ENCODE measurements at regions of chr11 and their contacts with region 1.

Region 1: GRCh38 chr11:11864332-11864731 is 22.6 kb downstream of the USP47 start:
- DNase-seq: no peak
- ATAC-seq: no peak
- H3K4me3 ChIP-seq: no peak overlapping the region
- H3K4me3 Mint-ChIP-seq: no peak overlapping the region
- H3K27ac ChIP-seq: no peak overlapping the region
- H3K27ac Mint-ChIP-seq: no peak overlapping the region
- H3K4me1 ChIP-seq: peaks cover 9 to 21% of the 10 kb centered on the region in 2 donors
- H3K4me1 Mint-ChIP-seq: peaks cover 61% of the 10 kb centered on the region
- H3K27me3 ChIP-seq: no peaks in the 10 kb centered on the region
- H3K27me3 Mint-ChIP-seq: no peaks in the 10 kb centered on the region
- CTCF ChIP-seq: no peak

Region 2: GRCh38 chr11:11777897-11778296 is 86.4 kb before region 1 on chr11:
- CTCF ChIA-PET with region 1: no interaction called
- POLR2A ChIA-PET with region 1: no interaction called
- intact Hi-C with region 1: no loop called
- DNase-seq: no peak
- ATAC-seq: no peak
- H3K4me3 ChIP-seq: no peak overlapping the region
- H3K4me3 Mint-ChIP-seq: no peak overlapping the region
- H3K27ac ChIP-seq: no peak overlapping the region
- H3K27ac Mint-ChIP-seq: no peak overlapping the region
- H3K4me1 ChIP-seq: no peaks in the 10 kb centered on the region
- H3K4me1 Mint-ChIP-seq: no peaks in the 10 kb centered on the region
- H3K27me3 ChIP-seq: peaks cover 0 to 9% (median 1%) of the 10 kb centered on the region in 4 experiments
- H3K27me3 Mint-ChIP-seq: peaks cover 44% of the 10 kb centered on the region
- CTCF ChIP-seq: no peak

Region 3: DNA sequence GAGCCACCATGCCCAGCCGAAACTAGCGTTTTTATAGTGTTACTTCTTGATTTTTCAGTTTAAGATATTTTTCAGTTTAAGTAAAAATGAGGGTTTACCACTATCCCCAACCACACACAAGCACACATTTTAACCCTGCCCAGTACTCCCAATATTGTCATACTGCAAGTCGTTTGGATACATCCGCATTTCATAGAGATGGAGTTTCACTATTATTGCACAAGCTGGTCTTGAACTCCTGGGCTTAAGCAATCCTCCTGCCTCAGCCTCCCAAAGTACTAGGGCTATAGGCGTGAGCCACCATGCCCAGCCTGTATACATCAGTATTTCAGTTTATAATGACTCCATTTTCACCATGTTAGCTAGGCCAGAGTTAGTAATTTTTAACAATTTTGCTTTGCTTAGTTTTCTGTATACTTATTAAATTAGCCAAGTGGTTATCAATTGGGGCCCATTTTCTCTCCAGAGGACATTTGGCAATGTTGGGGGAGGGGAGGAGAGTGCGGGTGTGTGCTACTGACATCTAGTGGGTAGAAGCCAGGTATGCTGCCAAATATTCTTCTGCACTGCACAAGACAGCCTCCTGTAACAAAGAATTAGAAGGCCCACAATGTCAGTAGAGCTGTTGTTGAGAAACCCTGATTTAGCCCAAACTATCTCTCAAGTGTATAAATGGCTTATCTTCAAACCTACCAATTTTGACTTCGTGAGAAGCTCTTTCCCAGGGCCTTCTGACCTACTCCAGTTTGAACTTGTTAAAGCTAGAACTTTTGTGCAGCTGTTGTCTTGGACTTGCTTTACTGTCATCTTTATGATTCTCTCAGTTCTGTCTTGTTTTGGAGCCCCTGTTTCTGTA is 15.2 kb before region 1 on chr11:
- CTCF ChIA-PET with region 1: interaction called, 12 read pairs
- POLR2A ChIA-PET with region 1: no interaction called
- intact Hi-C with region 1: no loop called
- DNase-seq: peak; percentile 80
- ATAC-seq: peak; percentile 96
- H3K4me3 ChIP-seq: no peak overlapping the region
- H3K4me3 Mint-ChIP-seq: no peak overlapping the region
- H3K27ac ChIP-seq: no peak overlapping the region
- H3K27ac Mint-ChIP-seq: no peak overlapping the region
- H3K4me1 ChIP-seq: peaks cover 24 to 48% of the 10 kb centered on the region in 2 donors
- H3K4me1 Mint-ChIP-seq: peaks cover 67% of the 10 kb centered on the region
- H3K27me3 ChIP-seq: no peaks in the 10 kb centered on the region
- H3K27me3 Mint-ChIP-seq: no peaks in the 10 kb centered on the region
- CTCF ChIP-seq: peak; percentile 84

Measured in B cell (primary cell).